ENCODE measurements at regions of chr10 and their contacts with region 1.

Region 1: GRCh38 chr10:98170249-98171117 is 36.0 kb downstream of the R3HCC1L start:
- DNase-seq: peak; percentile 33
- CTCF ChIP-seq: peak; percentile 73

Region 2: DNA sequence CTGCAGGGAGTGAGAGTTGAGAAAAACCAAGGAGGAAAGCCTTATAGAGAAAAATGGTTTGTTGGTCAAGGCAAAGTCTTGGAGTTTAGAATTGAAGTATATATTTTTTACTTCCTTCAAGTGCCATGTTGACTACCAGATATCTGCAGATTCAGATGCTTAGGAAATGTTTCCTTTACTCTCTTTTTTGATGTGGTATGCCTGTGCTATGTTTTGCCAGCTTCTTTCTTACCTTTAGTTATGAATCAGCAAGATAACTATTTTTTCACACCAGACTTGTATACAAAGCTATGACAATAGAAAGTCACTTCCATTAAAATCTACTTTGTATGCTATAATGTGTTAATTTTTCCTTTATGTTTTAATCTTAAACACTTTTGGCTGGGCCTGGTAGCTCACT is 32.5 kb before region 1 on chr10:
- CTCF ChIA-PET with region 1: interaction called, 21 read pairs
- POLR2A ChIA-PET with region 1: no interaction called
- DNase-seq: no peak
- CTCF ChIP-seq: no peak

Region 3: DNA sequence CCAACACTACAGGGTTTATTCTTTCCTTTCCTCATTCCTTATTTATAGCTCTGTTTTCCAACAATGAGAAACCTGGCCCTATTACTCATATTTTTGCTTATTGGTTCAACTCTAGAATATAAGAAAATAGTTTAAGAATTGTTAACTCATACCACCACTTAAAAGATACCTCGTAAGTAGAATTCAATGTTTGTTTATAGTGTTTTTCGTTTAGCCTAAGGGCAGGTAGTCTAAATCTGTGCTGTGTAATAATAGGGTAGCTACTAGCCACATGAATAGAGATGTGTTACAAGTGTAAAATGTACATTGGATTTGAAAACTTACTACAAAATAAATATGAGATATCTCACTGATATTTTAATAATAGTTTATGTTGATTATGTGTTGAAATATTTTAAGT is 10.5 kb before region 1 on chr10:
- CTCF ChIA-PET with region 1: interaction called, 35 read pairs
- POLR2A ChIA-PET with region 1: no interaction called
- DNase-seq: no peak
- CTCF ChIP-seq: no peak

Region 4: GRCh38 chr10:98186681-98187080 is 16.2 kb after region 1 on chr10:
- CTCF ChIA-PET with region 1: interaction called, 82 read pairs
- POLR2A ChIA-PET with region 1: no interaction called
- DNase-seq: no peak
- CTCF ChIP-seq: no peak

Region 5: DNA sequence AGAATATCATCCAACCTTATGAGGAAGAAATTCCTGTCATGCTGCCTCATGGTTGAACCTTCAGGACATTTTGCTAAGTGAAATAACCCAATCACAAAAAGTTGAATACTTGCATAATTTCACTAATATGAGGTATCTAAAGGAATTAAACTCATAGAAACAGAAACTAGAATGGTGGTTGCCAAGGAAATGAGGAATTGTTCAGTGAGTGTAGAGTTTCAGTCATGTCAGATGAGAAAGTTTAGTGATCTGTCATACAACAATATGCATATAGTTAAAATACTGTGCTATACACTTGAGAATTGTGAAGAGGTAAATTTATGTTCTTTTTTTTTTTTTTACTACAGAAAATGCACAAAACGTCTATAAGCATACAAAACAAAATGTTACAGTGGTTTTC is 24.6 kb after region 1 on chr10:
- CTCF ChIA-PET with region 1: interaction called, 25 read pairs
- POLR2A ChIA-PET with region 1: no interaction called
- DNase-seq: no peak
- CTCF ChIP-seq: no peak

Region 6: DNA sequence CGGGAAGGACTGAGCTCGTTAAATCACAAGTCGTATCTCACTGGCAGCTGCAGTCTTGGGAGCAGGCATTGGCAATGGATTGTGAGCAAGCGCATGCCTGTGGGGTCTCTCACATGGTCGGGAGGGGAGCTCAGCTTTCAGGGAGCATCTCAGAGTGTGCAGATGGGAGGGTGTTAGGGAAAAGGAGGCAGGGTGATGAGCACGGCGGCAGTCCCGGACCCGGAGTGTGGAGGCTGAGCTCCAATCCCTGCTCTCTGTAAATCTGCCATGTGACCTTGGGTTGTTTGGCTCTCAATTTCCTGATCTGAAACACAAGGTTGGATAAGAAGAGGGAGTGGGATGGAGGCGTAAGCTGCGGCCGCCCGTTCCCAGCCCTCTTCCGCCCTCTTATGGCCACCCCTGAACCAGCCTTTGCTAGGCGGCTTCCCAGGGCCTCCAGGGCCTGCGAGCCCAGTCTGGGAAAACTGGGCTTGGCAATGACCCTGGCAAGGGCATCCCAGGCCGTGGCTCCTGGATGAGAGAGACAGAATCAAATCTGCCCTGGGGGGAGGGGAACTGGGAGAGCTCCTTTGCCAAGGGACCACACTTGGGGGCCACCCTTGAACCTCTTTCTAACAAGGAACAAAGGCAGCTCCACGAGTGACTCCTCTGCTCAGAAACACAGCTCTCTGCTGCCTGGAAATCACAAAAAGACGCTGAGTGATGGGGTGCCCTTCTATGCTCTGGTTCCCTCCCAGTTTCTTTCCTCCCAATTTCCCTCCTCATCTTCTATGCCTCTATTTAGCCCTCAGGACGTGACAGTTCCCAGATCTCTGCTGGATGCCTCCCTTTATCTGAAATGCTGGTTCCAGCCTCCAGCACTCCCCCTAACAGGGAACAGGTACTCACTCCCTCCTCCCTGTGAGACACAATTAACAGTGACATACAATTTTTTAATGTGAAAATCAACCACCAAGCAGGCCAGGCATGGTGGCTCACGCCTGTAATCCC is 139.2 kb after region 1 on chr10:
- CTCF ChIA-PET with region 1: interaction called, 31 read pairs
- POLR2A ChIA-PET with region 1: no interaction called
- DNase-seq: peak; percentile 66
- CTCF ChIP-seq: peak; percentile 73

Region 7: DNA sequence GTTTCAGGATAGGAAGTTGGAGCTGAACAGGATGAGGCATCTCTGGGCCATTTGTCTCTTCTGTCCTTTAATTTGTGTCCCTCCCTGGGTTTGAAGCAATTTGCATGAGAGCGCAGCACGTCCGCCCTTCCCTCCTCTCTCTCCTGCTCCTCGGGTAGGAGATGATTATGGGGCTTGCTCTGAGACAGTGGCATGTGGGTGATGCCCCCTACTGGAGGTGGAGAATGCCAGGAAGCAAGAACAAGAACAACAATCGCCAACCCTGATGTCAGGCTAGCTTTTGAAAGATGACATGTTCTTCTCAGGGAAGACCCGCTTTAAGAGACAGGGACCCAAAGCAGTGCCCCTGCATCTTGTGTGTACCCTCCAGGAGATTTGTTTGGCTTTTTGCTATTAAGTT is 161.4 kb after region 1 on chr10:
- CTCF ChIA-PET with region 1: interaction called, 10 read pairs
- POLR2A ChIA-PET with region 1: no interaction called
- DNase-seq: no peak
- CTCF ChIP-seq: peak; percentile 16

Region 8: DNA sequence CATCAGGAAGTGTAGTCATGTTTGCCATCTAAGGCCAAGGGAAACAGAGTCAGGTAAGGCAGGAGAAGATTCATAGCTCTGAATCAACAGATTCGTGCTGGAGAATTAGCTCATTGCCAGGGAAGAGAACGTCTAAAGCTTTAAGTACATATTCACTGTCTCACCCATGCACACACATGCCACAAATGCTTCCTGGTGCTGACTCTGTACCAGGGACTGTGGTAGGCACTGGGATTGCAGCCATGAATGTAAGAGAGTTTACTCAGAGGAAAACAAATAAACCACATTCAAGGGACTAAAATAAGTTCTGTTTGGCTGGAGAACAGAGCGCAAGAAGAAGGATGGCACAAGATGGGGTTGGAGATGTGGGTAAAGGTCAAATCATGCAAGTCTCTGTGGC is 366.1 kb after region 1 on chr10:
- CTCF ChIA-PET with region 1: no interaction called
- POLR2A ChIA-PET with region 1: no interaction called
- DNase-seq: no peak
- CTCF ChIP-seq: no peak